ENCODE measurements at regions of chr19 and their contacts with region 1.

Region 1: DNA sequence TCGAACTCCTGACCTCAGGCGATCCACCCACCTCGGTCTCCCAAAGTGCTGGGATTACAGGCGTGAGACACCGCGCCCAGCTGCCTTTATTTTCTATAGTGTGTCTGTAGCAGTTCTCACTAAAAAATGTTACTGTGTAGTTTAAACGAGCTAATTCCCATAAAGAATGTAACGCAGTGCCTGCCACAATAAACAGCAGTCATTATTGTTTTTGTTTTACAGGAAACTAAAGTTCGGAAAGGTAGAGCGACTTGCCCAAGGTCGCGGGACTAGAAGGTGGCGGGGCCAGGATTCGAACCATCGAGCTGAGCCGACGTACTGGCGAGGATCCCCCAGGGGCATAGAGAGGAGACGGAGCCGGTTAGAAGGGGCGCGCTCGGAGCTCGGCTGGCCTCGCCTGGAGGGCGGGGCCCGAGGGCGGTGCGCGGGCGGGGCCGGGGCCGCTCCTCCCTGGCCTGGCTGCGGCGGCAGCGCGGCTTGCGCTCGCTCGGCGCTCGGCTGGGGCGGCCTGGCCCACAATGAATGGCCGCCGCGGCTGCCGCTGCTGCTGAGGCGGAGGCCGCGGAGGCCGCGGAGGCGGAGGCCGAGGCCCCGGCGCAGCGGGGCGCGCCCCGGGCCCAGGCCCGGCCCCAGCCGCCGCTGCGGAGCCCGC is at the start of gene NACC1:
- DNase-seq: peak; percentile 97
- ATAC-seq: peak; percentile 87
- H3K4me3 Mint-ChIP-seq: peak within 1 kb of the TSS; percentile 92
- H3K27ac Mint-ChIP-seq: peak within 1 kb of the TSS; percentile 92
- H3K4me1 Mint-ChIP-seq: peaks cover 19% of the 10 kb centered on the region
- H3K27me3 Mint-ChIP-seq: no peaks in the 10 kb centered on the region
- total RNA-seq, gene NACC1: 56.3 to 57.2 TPM

Region 2: DNA sequence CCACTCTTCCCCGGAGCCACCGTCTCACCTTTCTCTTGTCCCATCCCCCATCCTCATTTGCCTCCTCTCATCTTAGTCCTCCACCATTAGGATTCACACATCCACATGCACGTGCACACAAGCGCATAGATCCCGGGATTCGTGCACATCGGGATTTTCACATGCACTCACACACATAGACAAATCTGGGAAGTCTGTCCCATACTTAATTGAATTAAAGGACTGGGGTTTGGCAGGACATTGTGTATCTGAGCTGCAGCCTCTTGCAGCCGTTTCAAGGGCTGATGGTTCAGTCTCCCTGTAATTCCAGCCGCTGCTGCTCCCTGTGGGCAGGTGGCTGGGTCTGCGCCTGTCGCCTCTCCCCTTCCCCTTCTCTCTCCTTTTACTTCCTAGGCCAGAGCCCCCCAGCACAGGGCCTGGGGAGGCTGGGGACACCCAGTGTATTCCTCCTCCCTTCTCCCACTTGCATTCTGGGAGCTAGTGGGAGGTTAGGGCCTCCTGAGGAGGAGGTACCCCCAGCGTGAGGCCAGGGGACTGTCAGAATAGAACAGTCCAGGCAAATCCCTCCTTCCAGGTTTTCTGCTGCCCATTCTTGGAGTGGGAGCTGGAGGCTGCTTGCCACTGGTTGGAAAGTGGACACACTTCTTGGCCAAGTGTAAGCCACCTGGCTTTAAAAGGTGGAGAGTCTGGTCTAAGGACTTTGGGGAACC is 58.8 kb before region 1 on chr19:
- POLR2A ChIA-PET with region 1: no interaction called
- DNase-seq: no peak
- ATAC-seq: no peak
- H3K4me3 Mint-ChIP-seq: no peak overlapping the region
- H3K27ac Mint-ChIP-seq: no peak overlapping the region
- H3K4me1 Mint-ChIP-seq: peaks cover 10% of the 10 kb centered on the region
- H3K27me3 Mint-ChIP-seq: peaks cover 21% of the 10 kb centered on the region

Region 3: DNA sequence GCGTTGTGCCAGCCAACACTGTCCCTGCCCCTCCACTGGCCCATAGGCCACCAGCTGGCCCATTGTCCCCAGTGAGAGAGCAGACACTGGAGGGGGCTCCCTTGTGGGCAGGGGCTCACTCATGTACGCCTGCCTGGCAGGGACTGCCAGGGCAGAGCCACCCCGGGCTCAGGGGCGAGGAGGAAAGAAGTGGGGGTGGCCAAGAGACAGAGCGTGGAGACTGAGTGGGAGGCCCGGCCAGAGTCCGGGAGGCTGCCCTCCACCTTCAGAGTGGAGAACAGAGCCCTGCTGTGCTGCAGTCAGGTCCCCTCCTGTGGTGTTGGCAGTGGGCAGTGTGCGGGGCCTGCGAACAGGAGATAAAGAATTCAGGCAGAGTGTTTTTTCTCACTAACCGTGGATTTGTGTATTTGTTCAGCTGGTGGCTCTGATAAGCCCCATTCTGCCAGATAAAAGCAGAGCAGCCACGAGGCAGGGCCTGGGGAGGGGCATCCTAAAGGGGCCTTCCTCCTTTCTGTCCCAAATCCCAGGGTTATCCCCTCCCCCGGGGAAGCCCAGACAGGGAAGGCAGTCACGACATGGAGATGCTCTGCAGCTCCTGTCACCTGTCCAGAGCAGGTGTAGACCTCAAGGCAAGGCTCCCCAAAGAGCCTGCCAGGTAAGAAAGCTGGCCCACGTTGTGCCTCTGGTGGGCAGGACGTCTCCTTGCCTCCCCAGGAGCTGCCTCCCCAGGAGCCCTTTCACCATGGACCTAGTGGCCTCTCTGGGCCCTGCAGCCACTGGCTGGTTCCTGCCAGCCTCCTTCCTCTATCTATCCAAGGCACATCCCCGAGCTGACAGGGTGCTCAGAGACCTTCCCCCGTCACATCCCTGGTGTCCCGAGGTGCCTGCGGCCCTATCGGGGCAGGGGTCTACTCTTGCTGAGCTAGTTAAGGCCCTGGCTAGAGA is 48.2 kb before region 1 on chr19:
- POLR2A ChIA-PET with region 1: no interaction called
- DNase-seq: no peak
- ATAC-seq: no peak
- H3K4me3 Mint-ChIP-seq: no peak overlapping the region
- H3K27ac Mint-ChIP-seq: no peak overlapping the region
- H3K4me1 Mint-ChIP-seq: no peaks in the 10 kb centered on the region
- H3K27me3 Mint-ChIP-seq: peaks cover 3% of the 10 kb centered on the region

Region 4: GRCh38 chr19:13104360-13104847 is 13.5 kb before region 1 on chr19:
- POLR2A ChIA-PET with region 1: interaction called, 22 read pairs
- DNase-seq: peak; percentile 83
- ATAC-seq: peak; percentile 38
- H3K4me3 Mint-ChIP-seq: peak overlapping the region; percentile 93
- H3K27ac Mint-ChIP-seq: peak overlapping the region; percentile 92
- H3K4me1 Mint-ChIP-seq: peaks cover 21% of the 10 kb centered on the region
- H3K27me3 Mint-ChIP-seq: no peaks in the 10 kb centered on the region

Region 5: DNA sequence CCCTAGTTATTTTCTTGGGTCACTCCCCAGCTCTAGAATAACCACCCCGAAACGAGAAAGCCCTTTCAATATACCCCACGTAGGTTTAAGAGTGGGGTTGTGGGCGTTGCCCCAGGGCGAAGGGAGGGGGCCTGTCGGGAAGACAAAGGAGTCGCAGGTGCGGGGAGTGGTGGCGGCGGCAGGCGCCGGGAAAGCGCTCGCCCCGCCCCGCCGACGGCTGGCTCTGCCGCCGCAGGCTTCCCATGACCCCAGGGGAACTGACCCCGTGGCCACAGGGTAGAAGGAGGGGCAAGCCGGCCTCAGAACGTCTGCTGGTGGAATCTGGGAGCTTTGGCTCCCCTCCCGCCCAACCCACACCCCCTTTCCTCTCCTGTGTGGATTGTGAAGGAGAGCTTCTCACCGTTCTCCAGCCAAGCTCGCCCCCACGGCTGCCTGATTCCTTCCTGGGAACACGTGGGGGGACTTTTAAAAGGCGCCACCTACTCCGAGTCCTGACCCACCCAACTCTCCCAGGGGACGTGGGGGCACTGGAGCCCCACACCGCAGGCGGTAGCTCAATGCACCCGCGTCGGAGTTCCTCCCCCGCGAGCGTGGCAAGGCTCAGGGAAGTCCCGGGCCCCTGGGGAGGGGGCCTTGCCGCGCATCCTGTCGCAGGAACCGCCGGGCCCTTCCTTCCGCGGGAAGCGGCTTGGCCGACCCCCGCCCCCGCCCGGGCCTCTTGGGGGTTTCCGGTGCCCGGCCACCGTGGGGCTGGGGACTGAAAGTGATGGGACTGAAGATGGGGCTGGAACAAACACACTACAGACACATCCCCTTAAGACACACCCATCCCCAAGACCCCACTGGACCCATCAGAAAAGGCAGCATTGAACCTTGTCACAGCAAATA is 37.8 kb after region 1 on chr19:
- POLR2A ChIA-PET with region 1: interaction called, 50 read pairs
- DNase-seq: peak; percentile 87
- ATAC-seq: peak; percentile 16
- H3K4me3 Mint-ChIP-seq: peak overlapping the region; percentile 98
- H3K27ac Mint-ChIP-seq: peak overlapping the region; percentile 100
- H3K4me1 Mint-ChIP-seq: peaks cover 37% of the 10 kb centered on the region
- H3K27me3 Mint-ChIP-seq: no peaks in the 10 kb centered on the region

Region 6: DNA sequence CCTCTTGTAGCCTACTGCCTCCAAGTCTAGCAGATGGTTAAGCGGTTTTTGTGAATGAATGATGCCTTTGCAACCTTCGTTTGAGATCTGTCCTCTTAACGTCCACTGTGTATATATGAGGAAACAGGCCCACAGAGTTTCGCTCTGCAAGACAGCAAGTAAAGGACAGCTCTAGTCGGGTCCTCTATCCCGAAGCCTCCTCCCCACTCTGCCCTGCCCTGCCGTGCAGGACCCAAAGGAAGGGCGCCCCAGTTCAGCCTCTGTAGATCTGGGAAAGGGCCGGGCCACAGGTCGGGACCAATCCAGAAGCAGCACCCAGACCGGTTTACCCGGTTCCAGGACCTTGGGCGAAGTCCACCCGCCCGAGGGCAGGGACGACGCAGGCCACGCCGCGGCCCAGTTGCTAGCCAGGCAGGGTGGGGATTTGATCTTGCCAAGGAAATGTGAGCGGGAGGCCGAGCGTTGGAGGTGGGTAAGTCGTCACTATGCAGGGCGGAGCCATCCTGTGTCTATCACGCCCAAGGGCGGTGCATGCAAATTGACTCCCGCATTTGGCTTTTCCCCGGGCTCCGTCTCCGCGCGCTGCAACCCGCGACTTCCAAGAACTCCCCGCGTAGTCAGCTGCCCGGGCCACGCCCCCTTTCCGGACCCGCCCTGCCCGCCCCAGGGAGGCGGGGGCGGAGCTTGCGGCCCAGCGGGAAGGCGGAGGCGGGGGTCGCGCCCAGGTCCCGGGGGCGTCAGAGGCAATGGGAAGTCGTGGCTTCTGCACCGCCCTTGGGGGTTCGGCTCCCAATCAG is 44.8 kb after region 1 on chr19:
- POLR2A ChIA-PET with region 1: interaction called, 12 read pairs
- DNase-seq: peak; percentile 91
- ATAC-seq: peak; percentile 59
- H3K4me3 Mint-ChIP-seq: peak overlapping the region; percentile 92
- H3K27ac Mint-ChIP-seq: peak overlapping the region; percentile 96
- H3K4me1 Mint-ChIP-seq: peaks cover 52% of the 10 kb centered on the region
- H3K27me3 Mint-ChIP-seq: no peaks in the 10 kb centered on the region

Region 7: DNA sequence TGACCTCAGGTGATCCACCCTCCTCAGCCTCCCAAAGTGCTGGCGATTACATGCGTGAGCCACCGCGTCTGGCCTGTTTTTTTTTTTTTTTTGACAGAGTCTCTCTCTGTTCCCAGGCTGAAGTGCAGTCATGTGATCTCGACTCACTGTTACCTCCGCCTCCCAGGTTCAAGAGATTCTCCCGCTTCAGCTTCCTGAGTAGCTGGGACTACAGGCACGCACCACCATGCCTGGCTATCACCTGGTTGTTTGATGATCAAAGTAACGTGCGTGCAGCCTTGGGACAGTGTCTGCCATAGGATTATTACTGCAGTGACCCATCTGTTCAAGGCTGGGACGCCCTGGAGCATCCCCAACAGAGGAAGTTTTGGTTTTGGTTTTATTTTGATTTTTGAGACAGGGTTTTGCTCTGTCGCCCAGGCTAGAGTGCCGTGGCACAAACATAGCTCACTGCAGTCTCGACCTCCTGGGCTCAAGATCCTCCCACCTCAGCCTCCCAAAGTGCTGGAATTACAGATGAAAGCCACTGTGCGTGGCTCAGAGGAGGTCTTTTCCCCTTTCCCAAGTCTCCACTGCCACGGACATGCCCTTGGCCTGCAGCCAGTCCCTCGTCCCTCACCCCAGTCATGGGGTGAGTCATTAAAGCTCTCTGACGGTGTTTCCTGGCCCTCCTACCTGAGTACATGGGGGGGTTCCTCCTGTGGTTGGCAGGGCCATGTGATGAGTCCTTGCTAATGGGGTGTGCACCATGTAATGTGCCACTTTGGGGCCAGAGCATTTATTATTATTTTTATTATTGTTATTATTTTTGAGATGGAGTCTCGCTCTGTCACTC is 97.9 kb after region 1 on chr19:
- POLR2A ChIA-PET with region 1: no interaction called
- DNase-seq: no peak
- ATAC-seq: peak; percentile 41
- H3K4me3 Mint-ChIP-seq: peak overlapping the region; percentile 54
- H3K27ac Mint-ChIP-seq: peak overlapping the region; percentile 83
- H3K4me1 Mint-ChIP-seq: peaks cover 22% of the 10 kb centered on the region
- H3K27me3 Mint-ChIP-seq: peaks cover 3% of the 10 kb centered on the region

Measured in activated naive CD8-positive, alpha-beta T cell treated with anti-CD3 and anti-CD28 coated beads, Interleukin-2, amount 10 ng/mL, durations not matched to agents 7 days and 5 days (primary cell).